Heart right ventricle (tissue), 16 donors: ENCODE measurements at regions of chr1 and their contacts with region 1.

Region 1: DNA sequence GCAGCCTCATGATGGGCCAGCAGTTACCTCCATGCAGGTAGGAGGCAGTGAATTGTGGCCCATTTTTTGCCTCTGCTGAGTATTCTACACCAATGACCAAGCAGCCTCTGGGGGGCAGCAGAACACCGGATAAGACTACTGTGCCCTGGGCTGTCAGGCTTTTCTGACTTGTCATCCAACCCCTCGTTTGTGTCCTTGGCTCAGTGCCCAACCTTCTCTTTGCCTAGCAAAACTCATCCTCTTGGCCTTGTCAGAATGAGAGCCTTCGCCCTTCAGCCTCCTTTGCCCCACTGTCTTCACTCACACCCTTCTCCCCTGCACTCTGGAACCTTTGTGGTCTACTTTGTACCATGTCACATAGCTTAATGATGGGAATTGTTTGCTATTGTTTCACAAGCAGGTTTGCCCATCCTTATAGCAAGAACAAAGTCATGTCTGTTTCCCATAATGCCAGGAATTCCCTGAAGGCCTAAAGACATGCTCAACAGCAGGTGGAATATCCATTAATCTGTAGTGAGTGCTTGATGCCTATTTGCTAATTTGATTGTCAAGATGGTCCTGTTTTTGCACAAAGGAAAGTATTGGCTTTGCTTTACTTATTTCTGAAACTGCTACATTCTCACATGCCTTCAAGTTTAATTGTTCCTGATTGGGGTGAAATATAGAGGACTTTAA is 255.9 kb downstream of the HHAT start:
- DNase-seq: peak; percentile 71 to 77
- ATAC-seq: peak; percentile 69 to 91 (median 80)
- H3K4me3 ChIP-seq: no peak overlapping the region
- H3K27ac ChIP-seq: no peak overlapping the region
- H3K4me1 ChIP-seq: no peaks in the 10 kb centered on the region
- H3K27me3 ChIP-seq: no peaks in the 10 kb centered on the region
- CTCF ChIP-seq: peak; percentile 29 to 77 (median 65)

Region 2: DNA sequence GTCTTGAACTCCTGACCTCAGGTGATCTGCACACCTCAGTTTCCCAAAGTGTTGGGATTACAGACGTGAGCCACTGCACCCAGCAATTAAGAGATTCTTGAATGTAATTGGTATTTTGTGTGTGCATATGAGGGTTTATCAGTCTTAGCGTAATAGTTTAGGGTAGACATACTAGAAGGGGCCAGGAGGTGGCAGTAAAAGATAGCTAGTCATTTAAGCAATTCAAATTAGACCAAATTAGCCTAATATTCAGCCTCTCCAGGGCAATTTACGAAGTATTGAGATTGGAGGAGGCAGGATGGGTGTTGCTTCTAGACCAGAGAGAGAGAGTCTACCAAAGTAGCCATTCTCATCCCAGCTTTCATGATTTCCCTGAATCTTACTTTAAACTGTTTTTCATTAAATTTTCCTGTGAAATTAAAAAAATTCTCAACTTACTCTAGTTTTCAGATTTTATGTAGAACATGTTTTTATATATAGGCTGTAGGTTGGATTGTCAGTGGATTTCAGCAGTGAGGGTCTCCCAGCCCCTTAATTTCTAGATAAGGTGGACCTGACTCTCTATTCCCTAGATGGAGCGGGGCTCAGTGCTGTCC is 136.2 kb before region 1 on chr1:
- intact Hi-C with region 1: loop called in 2 of 10 experiments (anchors 10 kb)
- DNase-seq: peak in 1 of 2 donors; percentile 10
- ATAC-seq: peak in 1 of 8 donors; percentile 27
- H3K4me3 ChIP-seq: no peak overlapping the region
- H3K27ac ChIP-seq: no peak overlapping the region
- H3K4me1 ChIP-seq: no peaks in the 10 kb centered on the region
- H3K27me3 ChIP-seq: no peaks in the 10 kb centered on the region
- CTCF ChIP-seq: peak; percentile 17 to 70 (median 55)

Region 3: DNA sequence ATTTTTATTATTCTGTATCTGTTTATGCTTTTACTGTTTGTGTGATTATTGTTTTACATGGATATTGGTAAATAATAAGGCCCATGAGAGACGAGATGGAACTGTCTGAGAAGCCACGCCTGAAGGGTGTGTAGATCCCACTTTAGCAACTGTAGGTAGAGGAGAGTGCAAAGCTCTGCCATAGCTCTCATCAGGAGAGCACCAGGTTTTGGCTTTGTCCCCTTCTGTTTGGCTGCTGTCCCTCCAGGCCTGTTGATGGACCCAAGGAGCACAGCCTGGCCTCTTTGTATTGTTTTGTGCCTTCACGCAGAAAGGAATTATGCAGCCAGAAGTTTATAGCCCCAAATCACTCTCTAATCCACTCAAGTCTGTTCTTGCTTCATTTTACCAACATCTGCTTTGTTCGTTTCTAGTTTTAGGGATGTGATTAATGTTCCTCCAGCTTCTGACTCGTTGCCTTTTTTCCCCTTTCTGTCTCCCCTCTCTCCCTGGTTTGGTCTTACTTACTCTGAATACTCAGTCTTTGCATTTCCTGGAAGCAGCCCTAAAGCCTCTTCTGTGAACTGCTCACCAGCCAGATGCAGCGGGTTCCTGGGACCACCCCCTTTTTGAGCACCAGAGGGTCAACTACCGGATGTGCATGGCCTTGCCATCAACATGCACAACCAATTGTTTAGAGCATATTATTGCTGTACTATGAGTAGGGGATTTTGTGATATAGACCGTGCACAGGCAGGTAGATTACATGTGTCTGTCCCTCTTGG is 128.6 kb before region 1 on chr1:
- intact Hi-C with region 1: loop called in 1 of 10 experiments (anchors 10 kb)
- DNase-seq: no peak
- ATAC-seq: no peak
- H3K4me3 ChIP-seq: no peak overlapping the region
- H3K27ac ChIP-seq: no peak overlapping the region
- H3K4me1 ChIP-seq: no peaks in the 10 kb centered on the region
- H3K27me3 ChIP-seq: no peaks in the 10 kb centered on the region
- CTCF ChIP-seq: no peak

Region 4: DNA sequence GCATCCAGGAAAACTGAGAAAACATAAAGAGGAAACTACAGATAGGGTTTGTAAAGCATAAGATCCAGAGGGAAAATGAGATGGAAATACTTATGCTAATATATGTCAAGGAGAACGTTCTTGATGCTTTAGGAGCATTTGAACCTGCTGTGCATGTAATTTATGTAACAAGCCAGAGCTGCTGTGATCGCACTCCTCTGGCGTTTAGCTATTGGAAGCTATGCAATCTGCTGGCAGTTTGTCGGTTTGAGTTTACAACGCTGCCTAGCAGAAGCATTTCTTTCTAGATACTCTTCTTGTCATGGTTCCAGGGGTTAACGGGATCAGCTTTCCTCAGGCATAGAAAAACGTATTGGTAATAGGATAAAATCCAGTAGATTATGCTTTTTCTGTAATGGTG is 366.7 kb after region 1 on chr1:
- intact Hi-C with region 1: loop called in 4 of 10 experiments (anchors 5 to 10 kb)
- DNase-seq: no peak
- ATAC-seq: no peak
- H3K4me3 ChIP-seq: no peak overlapping the region
- H3K27ac ChIP-seq: no peak overlapping the region
- H3K4me1 ChIP-seq: no peaks in the 10 kb centered on the region
- H3K27me3 ChIP-seq: no peaks in the 10 kb centered on the region
- CTCF ChIP-seq: no peak